ENCODE measurements at regions of chr15 and their contacts with region 1.

Region 1: GRCh38 chr15:66603301-66604179 is 37.7 kb upstream of the LCTL start:
- DNase-seq: peak; percentile 54
- H3K4me3 ChIP-seq: no peak overlapping the region
- H3K27ac ChIP-seq: no peak overlapping the region
- H3K4me1 ChIP-seq: no peaks in the 10 kb centered on the region
- H3K27me3 ChIP-seq: no peaks in the 10 kb centered on the region
- CTCF ChIP-seq: peak; percentile 89

Region 2: DNA sequence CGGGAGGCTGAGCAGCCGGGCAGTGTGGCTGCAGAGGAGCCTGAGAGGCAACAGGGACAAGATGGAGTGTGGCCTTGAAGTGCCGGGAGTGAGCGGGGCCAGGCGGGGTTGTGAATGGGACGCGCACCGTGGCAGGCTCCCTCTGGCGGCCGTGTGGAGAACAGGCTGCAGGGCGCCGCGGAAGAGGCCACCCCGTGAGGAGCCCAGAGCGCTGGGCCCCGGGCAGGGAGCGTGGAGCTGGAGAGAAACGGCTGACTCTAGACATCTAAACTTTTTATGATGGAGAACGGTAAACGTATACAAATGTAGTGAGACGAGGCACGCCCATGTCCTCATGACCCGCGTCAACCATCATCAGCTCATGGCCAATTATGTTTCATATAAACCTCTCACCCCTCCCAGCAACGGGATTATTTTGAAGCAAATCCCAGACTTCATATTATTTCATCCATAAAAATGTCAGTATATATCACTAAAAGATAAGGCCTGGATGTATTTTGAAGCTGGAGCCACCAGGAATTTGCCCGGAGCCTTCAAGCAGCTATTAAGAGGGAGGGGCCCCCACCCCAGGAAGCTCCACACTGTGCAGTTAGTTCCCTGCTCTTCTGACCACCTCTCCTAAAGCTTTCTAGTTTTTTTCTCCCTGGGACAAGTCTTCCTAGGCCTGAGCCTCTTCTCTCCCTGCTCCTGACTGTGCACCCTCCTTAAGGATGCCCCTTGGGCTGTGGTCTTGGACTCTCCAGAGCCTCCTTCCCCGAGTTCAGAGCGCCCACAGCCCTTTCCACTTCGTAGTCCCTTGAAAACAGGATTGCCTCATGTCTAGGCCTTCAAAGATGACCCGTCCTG is 247.9 kb after region 1 on chr15:
- intact Hi-C with region 1: loop called (anchors 5 kb)
- DNase-seq: peak; percentile 86
- H3K4me3 ChIP-seq: peak overlapping the region; percentile 40
- H3K27ac ChIP-seq: peak overlapping the region; percentile 76
- H3K4me1 ChIP-seq: peaks cover 40% of the 10 kb centered on the region
- H3K27me3 ChIP-seq: no peaks in the 10 kb centered on the region
- CTCF ChIP-seq: peak; percentile 99